ENCODE measurements at regions of chr20 and their contacts with region 1.

Region 1: GRCh38 chr20:10476319-10476724 is 41.2 kb downstream of the SLX4IP start:
- DNase-seq: no peak
- H3K4me3 ChIP-seq: no peak overlapping the region
- H3K27ac ChIP-seq: no peak overlapping the region
- H3K4me1 ChIP-seq: no peaks in the 10 kb centered on the region
- H3K27me3 ChIP-seq: no peaks in the 10 kb centered on the region
- CTCF ChIP-seq: no peak
- POLR2A ChIP-seq: no peak

Region 2: DNA sequence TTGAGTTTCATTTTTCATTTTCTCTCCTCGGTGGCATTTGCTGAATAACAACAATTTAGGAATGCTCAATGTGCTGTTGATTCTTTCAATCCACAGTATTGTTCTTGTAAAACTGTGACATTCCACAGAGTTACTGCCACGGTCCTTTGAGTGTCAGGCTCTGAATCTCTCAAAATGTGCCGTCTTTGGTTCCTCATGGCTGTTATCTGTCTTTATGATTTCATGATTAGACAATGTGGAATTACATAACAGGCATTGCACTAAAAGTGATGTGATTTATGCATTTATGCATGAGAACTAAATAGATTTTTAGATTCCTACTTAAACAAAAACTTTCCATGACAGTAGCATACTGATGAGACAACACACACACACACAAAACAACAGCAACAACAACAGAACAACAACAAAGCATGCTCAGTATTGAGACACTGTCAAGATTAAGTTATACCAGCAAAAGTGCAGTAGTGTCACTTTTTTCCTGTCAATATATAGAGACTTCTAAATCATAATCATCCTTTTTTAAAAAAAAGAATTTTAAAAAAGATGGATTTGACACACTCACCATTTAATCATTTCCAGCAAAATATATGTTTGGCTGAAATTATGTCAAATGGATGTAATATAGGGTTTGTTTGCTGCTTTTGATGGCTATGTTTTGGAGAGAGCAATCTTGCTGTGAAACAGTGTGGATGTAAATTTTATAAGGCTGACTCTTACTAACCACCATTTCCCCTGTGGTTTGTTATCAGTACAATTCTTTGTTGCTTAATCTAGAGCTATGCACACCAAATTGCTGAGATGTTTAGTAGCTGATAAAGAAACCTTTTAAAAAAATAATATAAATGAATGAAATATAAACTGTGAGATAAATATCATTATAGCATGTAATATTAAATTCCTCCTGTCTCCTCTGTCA is 169.6 kb before region 1 on chr20:
- intact Hi-C with region 1: no loop called
- DNase-seq: no peak
- H3K4me3 ChIP-seq: no peak overlapping the region
- H3K27ac ChIP-seq: no peak overlapping the region
- H3K4me1 ChIP-seq: no peaks in the 10 kb centered on the region
- H3K27me3 ChIP-seq: no peaks in the 10 kb centered on the region
- CTCF ChIP-seq: no peak
- POLR2A ChIP-seq: no peak

Region 3: GRCh38 chr20:10434467-10434831 is 41.9 kb before region 1 on chr20:
- intact Hi-C with region 1: no loop called
- DNase-seq: peak in 1 of 2 donors; percentile 99
- H3K4me3 ChIP-seq: peak overlapping the region; percentile 93 to 94
- H3K27ac ChIP-seq: peak overlapping the region; percentile 92
- H3K4me1 ChIP-seq: peaks cover 51% of the 10 kb centered on the region
- H3K27me3 ChIP-seq: no peaks in the 10 kb centered on the region
- CTCF ChIP-seq: peak in 1 of 3 experiments; percentile 13
- POLR2A ChIP-seq: peak in 1 of 2 donors; percentile 92

Region 4: GRCh38 chr20:10521068-10521831 is 44.9 kb after region 1 on chr20:
- intact Hi-C with region 1: loop called (anchors 10 kb)
- DNase-seq: no peak
- H3K4me3 ChIP-seq: no peak overlapping the region
- H3K27ac ChIP-seq: peak overlapping the region; percentile 55
- H3K4me1 ChIP-seq: peaks cover 42% of the 10 kb centered on the region
- H3K27me3 ChIP-seq: no peaks in the 10 kb centered on the region
- CTCF ChIP-seq: no peak
- POLR2A ChIP-seq: no peak

Region 5: DNA sequence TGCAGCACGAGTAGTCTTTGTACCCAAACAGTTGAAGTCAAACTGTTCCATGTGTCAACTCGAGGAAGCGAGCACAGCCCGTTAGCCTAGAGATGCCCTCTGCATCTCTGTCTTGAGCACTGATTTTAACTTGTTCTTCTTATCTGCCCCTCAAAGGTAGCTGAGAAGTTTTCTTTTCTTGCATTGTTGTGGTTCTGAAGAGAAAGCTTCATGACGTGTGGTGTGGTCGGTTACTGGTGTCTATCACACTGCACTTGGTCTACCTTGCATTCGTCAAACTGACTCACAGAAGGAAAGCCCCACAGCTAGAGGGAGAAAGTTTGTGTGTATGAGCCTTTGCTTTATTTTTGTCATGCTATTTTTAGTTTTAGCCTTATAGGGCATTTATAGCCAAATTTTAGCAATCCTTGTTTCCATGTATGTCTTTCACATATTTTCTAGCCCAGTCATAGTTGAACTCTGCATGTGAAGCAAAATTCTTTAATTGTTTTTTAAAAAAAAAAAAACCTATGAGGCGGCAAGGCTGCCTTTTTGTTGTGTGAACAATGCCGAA is 82.4 kb after region 1 on chr20:
- intact Hi-C with region 1: no loop called
- DNase-seq: no peak
- H3K4me3 ChIP-seq: no peak overlapping the region
- H3K27ac ChIP-seq: peak overlapping the region; percentile 30
- H3K4me1 ChIP-seq: peaks cover 34% of the 10 kb centered on the region
- H3K27me3 ChIP-seq: no peaks in the 10 kb centered on the region
- CTCF ChIP-seq: no peak
- POLR2A ChIP-seq: no peak

Region 6: GRCh38 chr20:10739566-10739965 is 263.2 kb after region 1 on chr20:
- intact Hi-C with region 1: no loop called
- DNase-seq: no peak
- H3K4me3 ChIP-seq: peak overlapping the region in 1 of 2 donors; percentile 29
- H3K27ac ChIP-seq: peak overlapping the region; percentile 21
- H3K4me1 ChIP-seq: peaks cover 24% of the 10 kb centered on the region
- H3K27me3 ChIP-seq: no peaks in the 10 kb centered on the region
- CTCF ChIP-seq: no peak
- POLR2A ChIP-seq: no peak